ENCODE measurements at regions of chr5 and their contacts with region 1.

Region 1: DNA sequence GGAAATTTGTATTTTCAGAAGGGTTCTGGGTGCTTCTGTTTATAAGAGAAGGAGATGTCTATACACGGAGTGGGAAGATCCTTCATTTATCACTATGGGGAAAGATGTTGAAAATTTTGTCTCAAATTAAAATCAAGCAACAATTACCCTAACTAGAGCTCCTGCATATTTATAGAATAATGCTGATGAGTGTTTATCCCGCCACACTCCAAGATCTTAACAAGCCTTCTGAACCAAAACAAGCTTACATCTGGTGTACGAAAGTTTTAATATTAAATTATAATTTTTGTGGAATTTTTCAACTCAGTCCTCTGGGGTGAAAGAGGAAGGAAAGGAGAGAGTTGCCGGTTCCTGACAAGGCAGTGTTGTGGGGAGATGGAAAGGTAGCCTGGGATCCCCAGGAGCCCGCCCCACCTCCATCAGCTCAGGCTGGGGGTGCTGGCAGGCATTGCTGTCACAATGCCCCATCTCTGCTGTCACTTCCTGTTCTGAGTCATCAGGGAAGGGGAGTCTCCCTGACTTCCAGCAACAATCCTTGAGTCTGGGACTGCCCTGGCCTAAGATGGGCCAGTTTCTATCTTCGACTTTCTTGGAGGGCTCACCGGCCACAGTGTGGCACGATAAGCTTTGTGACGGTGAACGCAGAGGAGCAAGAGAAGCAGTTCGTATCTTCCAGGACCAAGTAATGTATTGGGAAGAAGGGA is 64.5 kb downstream of the ERAP1 start:
- DNase-seq: peak in 1 of 2 donors; percentile 63
- ATAC-seq: peak; percentile 36 to 64 (median 62)
- H3K4me3 ChIP-seq: no peak overlapping the region
- H3K27ac ChIP-seq: peak overlapping the region; percentile 43
- H3K4me1 ChIP-seq: peaks cover 4% of the 10 kb centered on the region
- H3K27me3 ChIP-seq: no peaks in the 10 kb centered on the region
- CTCF ChIP-seq: no peak

Region 2: DNA sequence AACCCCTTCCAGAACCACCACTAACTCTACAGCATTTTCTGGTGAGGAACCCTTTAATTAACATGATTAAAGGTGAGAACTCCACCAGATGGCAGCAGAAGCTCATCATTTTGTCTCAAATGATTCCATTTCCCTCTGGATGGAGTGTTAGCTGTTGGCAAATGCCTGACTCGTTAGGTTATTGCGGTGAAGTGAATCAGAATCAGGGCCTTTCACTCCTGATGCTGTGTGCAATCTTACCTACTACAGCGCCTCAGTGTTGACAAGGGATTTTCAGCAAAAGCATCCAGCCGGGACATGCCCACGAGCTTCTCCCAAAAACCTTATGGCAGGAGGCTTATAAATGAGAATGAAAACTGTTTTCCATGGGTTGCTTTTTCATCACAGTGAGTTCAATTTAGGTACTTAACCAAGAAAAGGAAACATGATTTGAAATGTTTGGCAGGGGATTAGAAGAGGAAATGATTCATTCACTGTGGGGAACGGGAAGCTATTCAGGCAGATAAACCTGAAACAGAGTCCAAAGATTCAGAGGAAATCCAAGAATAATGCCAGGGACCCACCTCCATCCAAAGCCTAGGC is 129.0 kb before region 1 on chr5:
- intact Hi-C with region 1: loop called in 1 of 2 experiments (anchors 10 kb)
- DNase-seq: no peak
- ATAC-seq: peak; percentile 93 to 98 (median 96)
- H3K4me3 ChIP-seq: no peak overlapping the region
- H3K27ac ChIP-seq: peak overlapping the region; percentile 48
- H3K4me1 ChIP-seq: peaks cover 8% of the 10 kb centered on the region
- H3K27me3 ChIP-seq: no peaks in the 10 kb centered on the region
- CTCF ChIP-seq: peak; percentile 63

Region 3: DNA sequence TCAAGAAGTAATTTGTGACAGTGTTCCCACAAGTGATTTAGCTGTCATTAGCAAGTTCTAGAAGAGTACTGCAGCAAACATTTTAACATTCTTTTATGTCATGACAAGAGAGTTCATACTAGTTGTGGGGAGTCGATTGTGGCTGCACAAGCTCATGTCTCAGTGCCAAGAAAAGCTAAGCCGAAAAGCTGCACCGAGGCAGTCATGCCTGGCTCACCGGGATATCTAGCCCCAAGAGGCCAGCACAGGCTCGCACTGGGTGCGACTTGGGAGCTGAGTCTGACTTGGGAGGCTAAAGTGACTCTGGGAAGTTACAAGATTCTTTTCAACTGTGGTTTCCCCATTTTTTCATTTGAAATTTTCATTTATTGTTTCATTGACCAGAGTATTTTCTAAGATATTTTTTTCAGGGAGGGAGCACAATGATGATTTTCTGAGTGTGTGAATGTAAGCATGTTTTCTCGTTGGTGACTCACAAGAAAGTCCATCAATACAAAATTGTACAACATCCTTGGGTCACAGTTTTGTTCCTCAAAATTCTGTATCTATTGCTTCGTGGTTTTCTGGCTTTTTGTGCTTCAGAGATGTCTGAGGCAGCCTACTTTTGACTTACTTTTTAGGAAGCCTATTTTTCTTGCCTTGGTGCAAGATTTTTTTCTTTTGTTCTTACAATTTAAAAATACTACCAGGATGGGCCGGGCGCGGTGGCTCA is 62.3 kb before region 1 on chr5:
- intact Hi-C with region 1: no loop called
- DNase-seq: no peak
- ATAC-seq: peak in 1 of 4 donors; percentile 39
- H3K4me3 ChIP-seq: no peak overlapping the region
- H3K27ac ChIP-seq: no peak overlapping the region
- H3K4me1 ChIP-seq: no peaks in the 10 kb centered on the region
- H3K27me3 ChIP-seq: no peaks in the 10 kb centered on the region
- CTCF ChIP-seq: no peak